ENCODE measurements at regions of chr3 and their contacts with region 1.

Region 1: DNA sequence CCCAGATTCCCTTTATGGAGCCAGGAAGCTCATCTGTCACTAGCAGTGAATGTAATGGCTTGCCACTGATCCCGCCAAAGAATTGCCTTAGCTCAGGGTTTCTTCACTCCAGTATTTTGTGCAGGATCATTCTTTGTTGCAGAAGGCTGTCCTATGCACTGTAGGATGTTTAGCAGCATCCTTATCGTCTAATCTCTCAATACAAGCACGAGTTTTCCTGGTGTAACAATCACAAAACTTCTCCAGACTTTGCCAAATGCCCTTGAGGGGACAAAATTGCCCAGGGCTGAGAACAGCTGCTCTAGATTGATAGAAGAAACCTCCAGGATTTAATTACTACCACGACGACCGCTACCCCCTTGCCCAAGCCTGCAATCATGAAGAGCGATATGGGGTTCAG is 6.8 kb upstream of the SHQ1 start:
- DNase-seq: no peak
- H3K4me3 ChIP-seq: no peak overlapping the region
- H3K27ac ChIP-seq: no peak overlapping the region
- H3K4me1 ChIP-seq: peaks cover 0 to 6% (median 0%) of the 10 kb centered on the region in 4 donors
- H3K27me3 ChIP-seq: peaks cover 2% of the 10 kb centered on the region
- CTCF ChIP-seq: no peak
- EP300 ChIP-seq: no peak
- POLR2A ChIP-seq: no peak

Region 2: DNA sequence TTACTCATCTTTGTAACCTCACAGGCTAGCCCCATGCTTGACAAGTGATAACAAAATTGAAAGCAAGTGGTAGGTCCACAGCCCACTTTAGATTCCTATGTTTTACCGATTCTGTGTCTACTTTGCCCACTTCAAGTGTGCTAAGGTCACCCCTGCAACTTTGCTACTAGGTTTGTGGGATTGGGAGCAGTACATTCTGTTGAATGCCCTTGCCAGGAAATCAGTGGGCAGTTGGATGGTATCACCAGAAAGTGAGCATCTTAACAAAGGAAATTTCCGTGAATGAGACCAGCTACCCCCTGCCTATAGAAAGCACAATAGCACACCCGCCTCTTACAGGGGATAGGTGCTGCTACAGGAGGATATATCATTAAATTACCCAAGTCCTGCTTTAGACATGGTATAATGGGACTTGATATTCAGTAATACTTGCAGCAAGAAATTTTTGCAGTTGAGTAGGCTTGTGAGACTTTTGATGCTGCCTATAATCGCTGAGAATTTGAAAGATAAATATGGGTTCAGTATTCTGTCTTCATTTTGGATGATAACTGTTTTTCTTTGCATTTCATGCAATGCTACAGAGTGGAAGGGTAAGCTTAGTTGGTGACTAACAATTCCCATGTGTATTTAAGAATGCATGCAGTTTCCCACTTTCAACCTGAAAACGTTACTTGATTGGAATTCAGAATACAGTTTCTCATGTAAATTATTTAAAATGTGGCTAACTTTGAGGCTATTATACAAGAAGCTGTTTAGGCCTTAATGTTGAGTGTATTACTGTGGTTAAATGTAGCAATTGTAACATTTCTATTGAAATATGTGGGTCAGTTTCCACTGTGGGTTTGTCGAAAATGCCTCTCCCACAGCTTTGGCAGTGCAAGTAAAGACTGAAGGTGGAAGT is 215.9 kb after region 1 on chr3:
- in situ Hi-C with region 1: loop called in 1 of 4 experiments (anchors 10 kb)
- intact Hi-C with region 1: no loop called
- DNase-seq: no peak
- H3K4me3 ChIP-seq: no peak overlapping the region
- H3K27ac ChIP-seq: no peak overlapping the region
- H3K4me1 ChIP-seq: no peaks in the 10 kb centered on the region
- H3K27me3 ChIP-seq: no peaks in the 10 kb centered on the region
- CTCF ChIP-seq: no peak
- EP300 ChIP-seq: no peak
- POLR2A ChIP-seq: no peak

Region 3: DNA sequence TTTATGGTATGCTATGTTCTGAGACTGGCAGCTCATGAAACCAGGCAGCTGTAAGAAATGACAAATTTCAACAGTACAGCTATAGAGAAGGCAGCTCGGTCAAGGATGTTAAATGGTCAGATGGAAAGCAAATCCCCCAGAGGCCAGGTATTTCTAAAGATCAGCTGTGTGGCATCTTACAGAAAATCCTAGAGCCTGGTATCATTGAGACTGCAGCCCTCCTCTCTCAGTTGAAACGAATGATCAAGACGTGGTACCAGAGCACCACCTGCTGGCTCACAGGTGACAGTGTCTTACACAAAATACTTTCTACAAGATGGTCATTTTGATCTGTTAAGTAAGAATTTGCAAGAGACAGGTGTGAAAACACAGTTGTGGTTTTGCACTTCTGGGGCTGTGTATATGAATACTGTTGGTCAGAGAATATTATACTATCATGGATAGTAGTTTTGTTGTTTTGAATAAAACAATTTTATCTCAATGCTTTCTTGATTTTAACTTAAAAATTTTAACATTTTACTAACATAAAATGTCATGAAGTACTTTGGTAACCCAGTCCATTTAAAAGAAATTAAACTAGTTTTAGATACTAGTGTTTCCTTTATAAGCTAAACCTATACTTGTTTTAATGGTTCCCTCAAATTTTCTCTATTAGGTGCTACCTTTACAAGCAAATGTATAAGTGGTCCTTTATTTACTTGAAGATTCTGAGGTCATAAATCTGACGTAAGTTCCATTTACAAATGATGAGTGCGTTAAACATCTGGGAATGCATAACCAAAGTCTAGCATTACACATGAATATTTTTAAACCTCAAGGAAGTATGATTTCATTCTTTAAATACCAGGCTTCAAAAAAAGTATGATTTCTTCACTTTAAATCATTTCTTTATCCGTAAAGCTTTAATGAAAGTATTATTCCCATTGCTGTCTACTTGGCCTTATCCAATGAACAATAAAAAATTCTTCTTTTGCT is 647.9 kb after region 1 on chr3:
- in situ Hi-C with region 1: no loop called
- intact Hi-C with region 1: no loop called
- DNase-seq: peak; percentile 75
- H3K4me3 ChIP-seq: no peak overlapping the region
- H3K27ac ChIP-seq: peak overlapping the region; percentile 15 to 35 (median 32)
- H3K4me1 ChIP-seq: peaks cover 10 to 28% (median 14%) of the 10 kb centered on the region in 4 donors
- H3K27me3 ChIP-seq: no peaks in the 10 kb centered on the region
- CTCF ChIP-seq: peak; percentile 77 to 87 (median 79)
- EP300 ChIP-seq: no peak
- POLR2A ChIP-seq: no peak